OCI-LY7 (cell line): ENCODE measurements at regions of chr14 and their contacts with region 1.

Region 1: DNA sequence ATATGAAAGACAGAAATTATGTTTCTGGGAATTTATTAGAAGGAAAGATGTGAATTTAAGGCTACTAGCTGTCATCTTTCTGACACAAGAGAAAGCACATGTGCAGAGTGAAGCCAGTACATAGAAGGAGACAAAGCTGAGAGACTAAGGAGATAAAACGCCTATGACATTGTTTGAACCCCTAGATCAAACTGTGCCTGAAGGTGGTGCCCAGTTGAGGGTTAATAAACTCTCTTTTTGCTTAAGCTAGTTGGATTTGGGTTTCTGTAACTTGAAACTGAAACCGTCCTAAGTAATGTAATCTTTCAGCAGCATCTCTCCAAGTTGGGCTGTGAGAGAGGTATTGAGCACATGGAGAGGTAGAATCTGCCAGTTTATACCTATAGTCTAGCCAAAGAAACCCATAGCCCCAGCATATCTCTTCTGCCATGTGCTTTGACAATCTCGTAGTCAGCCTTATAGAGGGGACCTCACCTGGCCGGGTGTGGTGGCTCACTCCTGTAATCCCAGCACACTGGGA is 84.2 kb downstream of the LRRC74A start:
- DNase-seq: no peak
- H3K4me3 ChIP-seq: no peak overlapping the region
- H3K27ac ChIP-seq: no peak overlapping the region
- H3K4me1 ChIP-seq: peaks cover 9% of the 10 kb centered on the region
- CTCF ChIP-seq: no peak

Region 2: DNA sequence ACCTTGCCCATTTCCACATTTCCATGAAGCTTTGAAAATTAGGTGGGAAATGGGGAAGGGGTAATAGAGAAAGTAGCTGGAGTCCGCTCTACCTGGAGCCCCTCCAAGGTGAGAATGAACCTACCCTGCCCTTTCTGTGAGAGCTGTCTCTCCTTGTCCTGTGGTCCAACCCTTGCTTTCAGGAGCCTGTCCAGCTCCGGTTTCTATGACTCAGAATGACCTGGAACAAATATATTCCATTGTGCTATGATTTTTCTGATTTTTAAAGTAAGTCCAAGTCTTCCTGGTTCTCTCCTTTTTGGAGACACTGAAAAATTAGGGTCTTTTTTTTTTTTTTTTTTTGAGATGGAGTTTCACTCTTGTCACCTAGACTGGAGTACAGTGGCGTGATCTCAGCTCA is 238.3 kb before region 1 on chr14:
- CTCF ChIA-PET with region 1: no interaction called
- POLR2A ChIA-PET with region 1: no interaction called
- intact Hi-C with region 1: no loop called
- DNase-seq: no peak
- H3K4me3 ChIP-seq: no peak overlapping the region
- H3K27ac ChIP-seq: no peak overlapping the region
- H3K4me1 ChIP-seq: no peaks in the 10 kb centered on the region
- CTCF ChIP-seq: no peak

Region 3: GRCh38 chr14:76947078-76947837 is 36.8 kb after region 1 on chr14:
- CTCF ChIA-PET with region 1: interaction called, 3 read pairs
- POLR2A ChIA-PET with region 1: no interaction called
- intact Hi-C with region 1: loop called (anchors 5 kb)
- DNase-seq: peak; percentile 80
- H3K4me3 ChIP-seq: no peak overlapping the region
- H3K27ac ChIP-seq: no peak overlapping the region
- H3K4me1 ChIP-seq: peaks cover 13% of the 10 kb centered on the region
- CTCF ChIP-seq: peak; percentile 62

Region 4: DNA sequence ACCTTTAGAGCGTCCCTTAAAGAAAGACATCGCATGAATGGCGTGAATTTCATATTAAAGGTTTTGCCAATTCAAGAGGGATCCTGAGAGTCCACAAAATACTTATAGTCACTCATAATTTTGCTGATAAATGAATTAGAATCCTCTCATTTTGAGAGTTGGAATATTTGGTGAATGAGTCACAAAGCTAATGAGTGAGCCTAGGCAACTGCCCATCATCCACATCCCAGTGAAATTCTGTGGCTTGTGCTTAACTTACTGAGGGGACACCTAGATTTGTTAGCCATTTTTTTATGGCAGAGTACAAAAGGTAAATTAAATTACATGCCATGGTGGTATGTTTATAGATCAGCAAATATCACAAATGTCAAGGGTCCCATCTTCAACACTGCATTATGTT is 525.6 kb after region 1 on chr14:
- CTCF ChIA-PET with region 1: no interaction called
- POLR2A ChIA-PET with region 1: no interaction called
- intact Hi-C with region 1: no loop called
- DNase-seq: no peak
- H3K4me3 ChIP-seq: no peak overlapping the region
- H3K27ac ChIP-seq: no peak overlapping the region
- H3K4me1 ChIP-seq: no peaks in the 10 kb centered on the region
- CTCF ChIP-seq: no peak